Naive thymus-derived CD4-positive, alpha-beta T cell (primary cell): ENCODE measurements at regions of chr1 and their contacts with region 1.

Region 1: GRCh38 chr1:39258146-39258924 is 53.8 kb downstream of the MACF1 start:
- DNase-seq: peak; percentile 41 to 73 (median 54)
- ATAC-seq: peak; percentile 84
- H3K4me3 ChIP-seq: no peak overlapping the region
- H3K4me3 Mint-ChIP-seq: peak overlapping the region in 1 of 10 donors; percentile 46
- H3K27ac ChIP-seq: peak overlapping the region; percentile 11
- H3K27ac Mint-ChIP-seq: peak overlapping the region in 7 of 9 donors; percentile 11 to 68 (median 53)
- H3K4me1 ChIP-seq: peaks cover 17 to 25% of the 10 kb centered on the region in 2 donors
- H3K4me1 Mint-ChIP-seq: peaks cover 21 to 52% (median 35%) of the 10 kb centered on the region in 7 donors
- H3K27me3 ChIP-seq: no peaks in the 10 kb centered on the region
- H3K27me3 Mint-ChIP-seq: no peaks in the 10 kb centered on the region

Region 2: DNA sequence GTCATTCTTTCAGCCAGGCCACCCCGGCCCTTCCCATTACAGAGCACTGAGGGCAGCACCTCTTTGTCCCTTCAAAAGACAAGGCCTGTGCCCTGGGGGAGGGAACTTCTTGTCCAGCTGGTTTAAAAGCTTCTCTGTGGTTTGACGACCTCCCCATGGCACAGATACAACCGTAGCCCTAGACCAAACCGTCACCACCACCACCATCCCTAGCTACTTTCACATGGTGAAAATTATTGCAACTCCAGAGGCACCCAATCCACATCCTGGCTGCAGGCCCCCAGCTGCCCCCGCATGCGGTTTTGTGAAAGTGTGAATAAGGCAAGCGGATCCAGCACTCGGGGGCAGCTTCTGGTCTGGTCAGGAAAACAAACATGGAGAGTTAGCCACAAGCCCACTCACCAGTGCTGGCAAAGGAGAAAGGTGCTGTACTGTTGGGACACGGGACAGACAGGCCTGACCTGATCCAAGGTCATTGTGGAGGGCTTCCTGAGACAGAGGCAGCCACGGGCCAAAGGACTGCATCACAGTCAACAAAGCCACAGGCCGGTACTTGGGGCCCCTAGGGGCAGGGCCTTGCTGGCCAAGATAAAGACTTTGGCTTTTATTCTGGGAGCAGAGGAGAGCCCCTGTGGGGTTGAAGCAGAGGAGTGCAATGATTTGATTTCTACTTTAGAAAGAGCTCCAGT is 1534.8 kb before region 1 on chr1:
- CTCF ChIA-PET with region 1: no interaction called
- POLR2A ChIA-PET with region 1: no interaction called
- intact Hi-C with region 1: no loop called
- DNase-seq: no peak
- ATAC-seq: no peak
- H3K4me3 ChIP-seq: no peak overlapping the region
- H3K4me3 Mint-ChIP-seq: no peak overlapping the region
- H3K27ac ChIP-seq: no peak overlapping the region
- H3K27ac Mint-ChIP-seq: no peak overlapping the region
- H3K4me1 ChIP-seq: no peaks in the 10 kb centered on the region
- H3K4me1 Mint-ChIP-seq: no peaks in the 10 kb centered on the region
- H3K27me3 ChIP-seq: no peaks in the 10 kb centered on the region
- H3K27me3 Mint-ChIP-seq: peaks cover 11 to 33% (median 26%) of the 10 kb centered on the region in 5 donors

Region 3: GRCh38 chr1:39098546-39099250 is 159.6 kb before region 1 on chr1:
- CTCF ChIA-PET with region 1: interaction called, 25 read pairs
- POLR2A ChIA-PET with region 1: interaction called, 3 read pairs
- intact Hi-C with region 1: loop called (anchors 1 kb)
- DNase-seq: peak in 8 of 9 donors; percentile 42 to 75 (median 69)
- ATAC-seq: peak; percentile 89
- H3K4me3 ChIP-seq: no peak overlapping the region
- H3K4me3 Mint-ChIP-seq: no peak overlapping the region
- H3K27ac ChIP-seq: no peak overlapping the region
- H3K27ac Mint-ChIP-seq: peak overlapping the region in 5 of 9 donors; percentile 5 to 65 (median 9)
- H3K4me1 ChIP-seq: peaks cover 3 to 10% of the 10 kb centered on the region in 2 donors
- H3K4me1 Mint-ChIP-seq: peaks cover 22 to 24% (median 23%) of the 10 kb centered on the region in 7 donors
- H3K27me3 ChIP-seq: no peaks in the 10 kb centered on the region
- H3K27me3 Mint-ChIP-seq: peaks cover 0 to 3% (median 0%) of the 10 kb centered on the region in 5 donors

Region 4: DNA sequence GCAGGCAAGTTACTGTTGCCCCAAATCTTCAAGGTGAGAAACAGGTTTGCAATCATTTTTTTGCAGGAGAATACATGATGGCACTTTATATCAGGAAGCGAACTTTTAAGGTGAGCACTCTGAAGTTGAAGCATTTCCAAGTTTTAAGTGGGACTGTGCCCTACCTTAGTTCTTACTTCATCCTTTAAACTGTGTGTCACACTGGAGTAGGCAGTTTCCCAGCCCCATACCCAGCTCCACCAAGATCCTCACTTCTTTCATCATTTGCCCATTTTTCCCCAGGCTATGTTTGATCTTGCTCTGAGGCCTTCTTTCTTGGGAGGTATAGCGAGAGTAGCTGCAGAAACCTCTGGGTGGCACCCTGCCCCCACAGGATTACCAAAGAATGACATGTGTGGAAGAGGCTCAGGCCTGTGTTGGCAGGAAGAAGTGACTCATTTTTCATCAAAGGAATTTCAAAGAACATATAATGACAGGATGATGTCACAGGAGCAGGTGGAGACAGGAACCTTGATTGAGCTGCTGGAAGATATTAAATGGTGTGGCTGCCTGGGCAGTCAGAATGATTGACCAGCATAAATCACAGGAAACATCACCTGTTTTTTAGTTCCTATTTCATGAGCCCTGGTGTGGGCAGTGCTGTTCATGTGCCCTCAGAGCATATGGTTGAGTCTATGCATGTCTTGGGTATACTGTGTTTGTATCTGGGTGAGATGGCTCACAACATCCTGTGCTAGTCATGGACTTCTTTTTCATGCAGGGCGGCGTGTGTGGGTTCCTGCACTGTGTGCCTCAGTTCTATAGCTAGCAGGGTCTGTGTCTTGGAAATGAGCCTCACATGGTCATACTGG is 74.6 kb before region 1 on chr1:
- CTCF ChIA-PET with region 1: interaction called, 298 read pairs
- POLR2A ChIA-PET with region 1: interaction called, 7 read pairs
- intact Hi-C with region 1: loop called (anchors 1 kb)
- DNase-seq: peak; percentile 38 to 94 (median 87)
- ATAC-seq: peak; percentile 97
- H3K4me3 ChIP-seq: no peak overlapping the region
- H3K4me3 Mint-ChIP-seq: peak overlapping the region in 8 of 10 donors; percentile 8 to 51 (median 39)
- H3K27ac ChIP-seq: peak overlapping the region; percentile 76
- H3K27ac Mint-ChIP-seq: peak overlapping the region; percentile 88 to 98 (median 97)
- H3K4me1 ChIP-seq: peaks cover 7 to 16% of the 10 kb centered on the region in 2 donors
- H3K4me1 Mint-ChIP-seq: peaks cover 19 to 50% (median 35%) of the 10 kb centered on the region in 7 donors
- H3K27me3 ChIP-seq: no peaks in the 10 kb centered on the region
- H3K27me3 Mint-ChIP-seq: no peaks in the 10 kb centered on the region

Region 5: GRCh38 chr1:39214998-39215873 is 43.1 kb before region 1 on chr1:
- CTCF ChIA-PET with region 1: interaction called, 9 read pairs
- POLR2A ChIA-PET with region 1: interaction called, 6 read pairs
- intact Hi-C with region 1: loop called in 1 of 2 experiments (anchors 1 kb)
- DNase-seq: peak in 4 of 9 donors; percentile 37 to 48 (median 46)
- ATAC-seq: peak; percentile 84
- H3K4me3 ChIP-seq: peak overlapping the region; percentile 64
- H3K4me3 Mint-ChIP-seq: peak overlapping the region; percentile 88 to 98 (median 94)
- H3K27ac ChIP-seq: peak overlapping the region; percentile 75
- H3K27ac Mint-ChIP-seq: peak overlapping the region; percentile 84 to 97 (median 92)
- H3K4me1 ChIP-seq: peaks cover 22 to 23% of the 10 kb centered on the region in 2 donors
- H3K4me1 Mint-ChIP-seq: peaks cover 38 to 67% (median 54%) of the 10 kb centered on the region in 7 donors
- H3K27me3 ChIP-seq: no peaks in the 10 kb centered on the region
- H3K27me3 Mint-ChIP-seq: no peaks in the 10 kb centered on the region

Region 6: DNA sequence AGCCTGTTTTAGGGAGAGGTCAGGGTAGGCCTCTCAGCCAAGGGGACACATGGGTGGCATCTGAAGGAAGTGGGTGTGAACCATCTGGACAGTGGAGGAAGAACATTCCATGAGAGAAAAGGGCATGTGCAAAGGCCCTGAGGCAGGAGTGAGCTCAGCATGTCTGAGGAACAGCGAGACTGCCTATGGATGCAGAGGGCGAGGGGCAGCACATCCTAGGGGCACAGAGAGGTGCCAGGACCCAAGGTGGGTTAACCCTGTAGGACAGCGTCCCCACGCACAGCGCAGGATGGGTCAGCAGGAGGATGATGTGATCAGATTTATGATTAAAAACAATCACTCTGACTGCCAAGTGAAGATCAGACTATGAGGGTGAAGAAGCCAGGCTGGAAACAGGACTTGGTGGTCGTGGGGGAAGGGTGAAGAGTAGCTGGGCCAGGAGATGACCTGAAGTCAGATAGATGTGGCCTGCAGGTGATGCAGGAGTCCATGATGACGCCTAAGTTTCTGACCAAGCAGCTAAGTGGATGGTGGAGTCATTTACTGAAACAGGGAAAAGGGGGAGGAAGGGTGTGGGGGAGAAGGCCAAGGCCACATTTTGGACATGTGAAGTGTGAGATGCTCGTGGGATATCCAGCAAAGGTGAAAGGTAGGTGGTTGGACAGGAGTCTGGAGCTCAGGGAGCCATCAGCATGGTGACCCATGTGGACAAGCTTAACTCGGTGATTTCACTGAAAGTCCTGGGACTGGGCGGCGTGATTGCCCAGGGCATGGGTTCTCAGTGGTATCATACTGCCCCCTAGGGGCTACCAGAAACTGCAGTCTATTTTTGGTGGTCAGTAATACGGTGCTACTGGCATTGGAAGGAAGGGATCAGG is 280.5 kb after region 1 on chr1:
- CTCF ChIA-PET with region 1: no interaction called
- POLR2A ChIA-PET with region 1: no interaction called
- intact Hi-C with region 1: loop called in 1 of 2 experiments (anchors 1 kb)
- DNase-seq: peak in 7 of 9 donors; percentile 14 to 43 (median 39)
- ATAC-seq: peak; percentile 77
- H3K4me3 ChIP-seq: no peak overlapping the region
- H3K4me3 Mint-ChIP-seq: no peak overlapping the region
- H3K27ac ChIP-seq: no peak overlapping the region
- H3K27ac Mint-ChIP-seq: peak overlapping the region in 2 of 9 donors; percentile 26 to 30
- H3K4me1 ChIP-seq: no peaks in the 10 kb centered on the region
- H3K4me1 Mint-ChIP-seq: peaks cover 0 to 10% (median 0%) of the 10 kb centered on the region in 7 donors
- H3K27me3 ChIP-seq: no peaks in the 10 kb centered on the region
- H3K27me3 Mint-ChIP-seq: no peaks in the 10 kb centered on the region